Psoas muscle (tissue), 8 donors: ENCODE measurements at regions of chr18 and their contacts with region 1.

Region 1: DNA sequence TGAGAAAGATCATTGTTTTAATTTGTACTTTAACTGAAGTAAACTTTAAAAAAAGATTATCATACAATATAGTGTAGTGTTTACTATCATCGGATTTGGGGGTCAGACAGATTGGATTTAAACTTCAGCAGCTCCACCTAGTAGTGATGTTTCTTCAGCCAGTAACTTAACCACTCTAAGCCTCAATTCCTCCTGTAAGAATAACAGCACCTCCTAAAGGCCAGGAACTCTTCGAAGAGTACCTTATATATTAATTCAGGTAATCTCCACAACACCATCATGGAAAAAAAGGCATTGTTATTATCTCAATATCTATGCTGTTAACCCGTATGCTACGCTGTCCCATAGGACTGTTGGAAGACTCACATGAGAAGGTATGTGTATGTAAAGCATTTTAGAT is 69.0 kb upstream of the DLGAP1 start:
- DNase-seq: no peak
- ATAC-seq: no peak
- H3K4me3 ChIP-seq: no peak overlapping the region
- H3K27ac ChIP-seq: no peak overlapping the region
- H3K4me1 ChIP-seq: no peaks in the 10 kb centered on the region
- H3K27me3 ChIP-seq: no peaks in the 10 kb centered on the region
- CTCF ChIP-seq: no peak

Region 2: GRCh38 chr18:4468511-4468910 is 55.6 kb before region 1 on chr18:
- intact Hi-C with region 1: loop called in 1 of 2 experiments (anchors 10 kb)
- DNase-seq: no peak
- ATAC-seq: no peak
- H3K4me3 ChIP-seq: no peak overlapping the region
- H3K27ac ChIP-seq: no peak overlapping the region
- H3K4me1 ChIP-seq: no peaks in the 10 kb centered on the region
- H3K27me3 ChIP-seq: no peaks in the 10 kb centered on the region
- CTCF ChIP-seq: no peak

Region 3: GRCh38 chr18:5030636-5031035 is 506.5 kb after region 1 on chr18:
- intact Hi-C with region 1: no loop called
- DNase-seq: no peak
- ATAC-seq: no peak
- H3K4me3 ChIP-seq: no peak overlapping the region
- H3K27ac ChIP-seq: no peak overlapping the region
- H3K4me1 ChIP-seq: no peaks in the 10 kb centered on the region
- H3K27me3 ChIP-seq: no peaks in the 10 kb centered on the region
- CTCF ChIP-seq: no peak